ENCODE measurements at regions of chr6 and their contacts with region 1.

Region 1: DNA sequence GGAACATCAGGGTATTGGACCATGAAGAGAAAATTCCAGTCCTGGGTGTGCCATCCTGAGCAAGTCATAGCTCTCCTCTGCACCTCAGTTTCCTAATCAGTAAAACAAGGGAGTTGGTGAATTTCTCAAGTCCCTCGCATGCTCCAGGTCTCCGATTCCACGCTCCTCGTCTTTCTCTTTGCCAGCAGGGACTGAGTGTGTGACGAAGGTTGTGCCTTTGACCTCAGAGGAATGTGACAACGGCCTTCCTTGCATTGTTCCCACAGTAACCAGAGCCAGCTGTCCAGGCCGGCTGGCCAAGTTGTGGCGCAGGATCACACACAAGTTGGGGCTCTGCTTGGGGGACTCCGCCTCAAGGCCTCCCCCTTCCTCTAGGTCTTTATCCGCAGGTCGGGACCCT is 217.3 kb downstream of the ATXN1 start:
- DNase-seq: no peak
- ATAC-seq: no peak
- H3K4me3 ChIP-seq: no peak overlapping the region
- H3K4me3 Mint-ChIP-seq: no peak overlapping the region
- H3K27ac ChIP-seq: no peak overlapping the region
- H3K27ac Mint-ChIP-seq: no peak overlapping the region
- H3K4me1 ChIP-seq: no peaks in the 10 kb centered on the region
- H3K4me1 Mint-ChIP-seq: peaks cover 0 to 2% (median 0%) of the 10 kb centered on the region in 3 donors
- H3K27me3 ChIP-seq: no peaks in the 10 kb centered on the region
- H3K27me3 Mint-ChIP-seq: no peaks in the 10 kb centered on the region

Region 2: DNA sequence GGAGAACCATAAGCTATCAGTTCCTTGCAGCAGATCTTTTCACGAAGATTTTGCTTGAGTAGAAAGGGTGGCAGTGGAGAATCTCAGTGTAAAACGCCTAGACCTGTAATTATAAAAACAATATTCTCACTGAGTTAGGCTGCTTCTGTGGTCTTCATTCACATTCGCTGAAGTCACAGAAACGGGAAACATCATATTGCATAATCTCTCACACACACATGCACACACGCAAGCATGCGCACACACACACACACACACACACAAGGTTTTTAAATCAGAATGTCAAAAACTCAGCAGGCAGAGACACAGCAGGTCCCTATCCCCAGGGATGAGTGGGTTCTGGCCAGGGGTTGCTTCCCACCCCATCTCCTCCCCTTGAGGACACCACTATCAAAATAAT is 41.8 kb after region 1 on chr6:
- CTCF ChIA-PET with region 1: no interaction called
- POLR2A ChIA-PET with region 1: no interaction called
- DNase-seq: no peak
- ATAC-seq: no peak
- H3K4me3 ChIP-seq: no peak overlapping the region
- H3K4me3 Mint-ChIP-seq: peak overlapping the region in 1 of 3 donors; percentile 42
- H3K27ac ChIP-seq: no peak overlapping the region
- H3K27ac Mint-ChIP-seq: peak overlapping the region in 1 of 2 donors; percentile 0
- H3K4me1 ChIP-seq: no peaks in the 10 kb centered on the region
- H3K4me1 Mint-ChIP-seq: peaks cover 4 to 15% (median 4%) of the 10 kb centered on the region in 3 donors
- H3K27me3 ChIP-seq: no peaks in the 10 kb centered on the region
- H3K27me3 Mint-ChIP-seq: no peaks in the 10 kb centered on the region

Region 3: DNA sequence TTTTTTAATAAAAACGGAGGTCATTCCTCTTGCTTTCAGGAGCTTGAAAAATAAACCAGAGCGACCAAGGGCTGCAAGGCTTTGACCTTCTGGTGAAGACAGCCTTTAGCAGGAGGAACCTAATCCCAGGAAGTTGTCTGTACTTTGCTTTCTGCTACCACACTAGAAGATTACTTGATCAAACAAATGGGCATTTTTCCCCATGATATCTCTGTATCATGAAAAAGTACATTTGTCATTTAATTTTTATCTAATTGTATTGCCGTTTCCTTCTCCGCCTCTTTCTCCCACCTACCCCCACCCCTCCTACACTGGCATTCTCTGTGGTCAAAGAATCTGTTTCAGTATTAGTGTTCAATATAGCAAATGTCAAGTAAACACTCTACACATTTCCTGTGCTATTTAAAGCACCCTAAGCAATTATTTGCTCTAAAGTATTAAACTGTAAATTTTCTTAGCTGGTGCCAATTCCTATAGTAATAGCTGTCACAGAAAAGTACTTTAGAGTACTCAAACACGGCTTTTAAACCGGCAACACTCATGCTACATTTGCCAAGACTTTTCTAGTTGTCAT is 187.6 kb after region 1 on chr6:
- CTCF ChIA-PET with region 1: no interaction called
- POLR2A ChIA-PET with region 1: interaction called in 1 of 2 experiments, 10 read pairs
- DNase-seq: peak in 9 of 35 experiments; percentile 9 to 54 (median 21)
- ATAC-seq: peak; percentile 52 to 73 (median 68)
- H3K4me3 ChIP-seq: peak overlapping the region in 1 of 2 donors; percentile 6
- H3K4me3 Mint-ChIP-seq: peak overlapping the region; percentile 22 to 61 (median 57)
- H3K27ac ChIP-seq: peak overlapping the region; percentile 69
- H3K27ac Mint-ChIP-seq: peak overlapping the region; percentile 77
- H3K4me1 ChIP-seq: peaks cover 6 to 31% of the 10 kb centered on the region in 2 experiments
- H3K4me1 Mint-ChIP-seq: peaks cover 28 to 60% (median 44%) of the 10 kb centered on the region in 3 donors
- H3K27me3 ChIP-seq: no peaks in the 10 kb centered on the region
- H3K27me3 Mint-ChIP-seq: no peaks in the 10 kb centered on the region

Measured in T-cell (primary cell).